ENCODE measurements at regions of chr5 and their contacts with region 1.

Region 1: DNA sequence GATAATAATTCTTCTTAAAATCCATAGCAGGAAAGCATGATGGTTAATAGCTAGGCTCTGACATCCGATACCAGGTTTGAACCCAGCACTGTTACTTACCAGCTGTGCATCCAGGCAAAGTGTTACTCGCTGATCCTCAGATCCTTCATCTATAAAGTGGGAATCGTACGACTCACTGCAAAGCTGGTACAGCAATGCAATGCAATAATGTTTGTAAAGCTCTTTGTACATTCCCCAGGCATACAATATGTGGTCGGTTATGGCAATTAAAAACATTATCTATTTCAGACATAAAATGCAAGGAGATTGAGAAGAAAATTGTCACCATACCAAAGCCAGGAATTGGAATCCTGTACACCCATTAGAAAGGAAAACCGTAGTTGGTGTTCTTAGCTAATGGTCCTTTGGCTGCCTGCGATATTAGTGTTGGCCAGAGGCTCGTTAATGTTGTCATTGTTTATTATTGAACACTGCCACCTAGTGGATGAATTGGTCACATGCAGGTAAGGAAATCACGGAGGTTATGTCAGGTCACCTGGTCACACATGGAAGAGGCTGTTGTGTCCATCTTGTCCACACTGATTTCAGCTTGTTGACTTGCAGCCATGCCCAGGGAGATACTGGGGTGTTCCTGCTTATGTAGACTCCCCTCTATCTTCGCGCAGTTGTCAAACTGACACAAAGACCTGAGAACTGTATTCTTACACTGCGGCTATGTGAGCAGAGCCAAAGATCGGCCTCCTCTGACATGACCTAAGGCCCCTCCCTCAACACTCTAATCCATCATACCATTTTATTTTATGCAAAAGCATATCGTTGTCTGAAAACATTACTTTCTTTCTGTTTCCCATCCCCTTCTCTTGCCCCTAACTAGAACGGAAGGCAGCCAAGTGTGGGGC is 87.5 kb upstream of the PPP2R2B start:
- DNase-seq: peak; percentile 68
- H3K4me3 ChIP-seq: no peak overlapping the region
- H3K27ac ChIP-seq: no peak overlapping the region
- H3K4me1 ChIP-seq: no peaks in the 10 kb centered on the region
- H3K27me3 ChIP-seq: no peaks in the 10 kb centered on the region
- CTCF ChIP-seq: peak; percentile 88 to 97 (median 92)
- POLR2A ChIP-seq: no peak

Region 2: GRCh38 chr5:146544232-146544631 is 421.8 kb before region 1 on chr5:
- intact Hi-C with region 1: loop called (anchors 2 kb)
- DNase-seq: no peak
- H3K4me3 ChIP-seq: no peak overlapping the region
- H3K27ac ChIP-seq: no peak overlapping the region
- H3K4me1 ChIP-seq: no peaks in the 10 kb centered on the region
- H3K27me3 ChIP-seq: no peaks in the 10 kb centered on the region
- CTCF ChIP-seq: no peak
- POLR2A ChIP-seq: no peak

Region 3: DNA sequence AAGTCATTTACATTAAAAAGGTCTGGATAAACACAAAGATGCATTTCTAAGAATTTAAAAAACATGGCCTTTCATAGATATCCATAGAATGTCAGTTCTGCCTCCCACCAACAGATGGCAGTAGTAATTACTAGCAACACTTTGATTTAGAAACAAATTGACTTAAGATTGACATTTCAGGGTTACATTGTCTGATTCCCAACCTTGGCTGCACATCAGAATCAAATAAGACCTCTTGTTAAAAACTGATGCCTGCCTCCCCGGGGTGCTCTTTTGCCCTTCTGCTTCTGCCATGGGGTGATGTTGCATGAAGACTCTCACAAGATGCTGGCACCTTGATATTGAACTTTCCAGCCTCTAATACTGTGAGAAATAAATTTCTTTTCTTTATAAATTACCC is 303.8 kb before region 1 on chr5:
- intact Hi-C with region 1: loop called (anchors 5 kb)
- DNase-seq: no peak
- H3K4me3 ChIP-seq: no peak overlapping the region
- H3K27ac ChIP-seq: no peak overlapping the region
- H3K4me1 ChIP-seq: no peaks in the 10 kb centered on the region
- H3K27me3 ChIP-seq: no peaks in the 10 kb centered on the region
- CTCF ChIP-seq: peak in 3 of 4 experiments; percentile 32 to 49 (median 37)
- POLR2A ChIP-seq: no peak

Region 4: DNA sequence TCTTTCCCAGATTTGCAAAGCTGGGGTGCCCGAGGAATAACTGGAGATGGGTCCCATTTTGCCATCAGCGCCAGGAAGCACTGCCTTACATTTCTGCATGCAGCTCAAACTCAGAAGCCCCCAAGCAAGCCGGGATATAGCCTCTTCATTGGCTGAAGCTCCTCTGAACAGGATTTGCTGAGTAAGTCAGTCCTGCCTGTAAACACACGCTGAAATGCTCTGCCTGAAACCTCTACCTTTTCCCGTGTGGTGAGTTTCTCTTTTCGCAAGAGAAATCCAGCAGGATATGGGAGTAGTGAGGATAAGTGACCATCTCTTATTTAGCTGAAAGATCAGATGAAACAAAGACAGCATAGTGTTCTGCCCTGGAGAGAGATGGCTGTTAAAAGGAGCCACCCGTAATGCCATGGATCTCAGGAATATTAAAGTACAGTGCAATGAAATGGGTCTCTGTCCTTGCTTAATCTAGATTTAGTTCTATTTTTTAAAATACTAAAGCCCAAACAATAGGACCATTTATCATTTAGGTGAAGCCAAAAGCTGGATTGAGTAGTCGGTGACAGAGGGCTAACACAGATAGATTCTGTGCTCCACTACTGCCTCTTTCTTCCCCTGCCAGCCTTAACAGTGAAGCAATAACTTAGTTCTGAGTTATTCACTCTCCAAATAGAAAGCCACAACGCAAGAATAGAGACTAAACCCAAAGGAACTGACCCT is 90.0 kb after region 1 on chr5:
- intact Hi-C with region 1: no loop called
- DNase-seq: no peak
- H3K4me3 ChIP-seq: no peak overlapping the region
- H3K27ac ChIP-seq: no peak overlapping the region
- H3K4me1 ChIP-seq: no peaks in the 10 kb centered on the region
- H3K27me3 ChIP-seq: peaks cover 5% of the 10 kb centered on the region
- CTCF ChIP-seq: no peak
- POLR2A ChIP-seq: no peak

Region 5: DNA sequence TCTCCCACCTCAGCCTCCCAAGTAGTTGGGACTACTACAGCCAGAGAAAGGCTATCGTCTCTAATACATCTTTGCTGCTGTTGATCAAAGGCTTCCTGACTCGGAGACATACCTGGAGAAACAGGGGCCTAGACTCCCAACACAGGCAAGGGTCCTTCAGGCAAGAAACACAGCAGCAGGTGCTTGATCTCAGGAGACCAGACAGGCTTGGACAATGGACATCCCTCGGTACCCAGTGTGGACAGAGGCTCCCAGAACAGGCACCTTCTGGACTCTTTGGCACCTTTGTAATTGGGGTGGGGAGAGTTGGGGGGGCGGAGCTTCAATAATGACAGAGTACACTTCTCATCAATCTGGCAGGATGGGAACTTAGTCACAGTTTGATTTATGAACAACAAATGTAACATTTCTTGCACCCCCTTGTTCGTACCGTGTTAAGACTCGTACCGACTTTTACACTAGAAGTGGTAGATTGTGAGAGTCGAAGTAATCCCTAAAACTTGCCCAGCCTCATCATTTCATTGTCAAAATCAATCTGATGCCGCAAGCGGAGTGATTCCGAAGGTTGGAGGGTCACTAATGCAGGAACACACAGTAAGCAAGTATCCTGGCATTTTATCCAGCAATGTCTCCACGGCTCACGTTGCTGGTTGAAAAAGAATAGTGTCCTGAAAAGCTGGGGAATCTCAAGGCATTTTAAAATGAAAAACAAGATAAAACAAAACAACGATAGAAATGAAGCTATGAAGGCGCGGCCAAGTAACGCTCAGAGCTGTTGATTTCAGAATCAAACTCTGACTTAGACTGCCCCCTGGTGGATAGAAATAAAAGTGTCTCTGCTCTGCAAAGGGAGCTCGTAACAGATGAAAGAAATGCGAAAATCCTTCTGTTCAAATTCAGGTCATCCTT is 222.4 kb after region 1 on chr5:
- intact Hi-C with region 1: loop called (anchors 10 kb)
- DNase-seq: peak; percentile 38
- H3K4me3 ChIP-seq: no peak overlapping the region
- H3K27ac ChIP-seq: no peak overlapping the region
- H3K4me1 ChIP-seq: no peaks in the 10 kb centered on the region
- H3K27me3 ChIP-seq: peaks cover 3% of the 10 kb centered on the region
- CTCF ChIP-seq: peak; percentile 66 to 93 (median 72)
- POLR2A ChIP-seq: no peak

Region 6: DNA sequence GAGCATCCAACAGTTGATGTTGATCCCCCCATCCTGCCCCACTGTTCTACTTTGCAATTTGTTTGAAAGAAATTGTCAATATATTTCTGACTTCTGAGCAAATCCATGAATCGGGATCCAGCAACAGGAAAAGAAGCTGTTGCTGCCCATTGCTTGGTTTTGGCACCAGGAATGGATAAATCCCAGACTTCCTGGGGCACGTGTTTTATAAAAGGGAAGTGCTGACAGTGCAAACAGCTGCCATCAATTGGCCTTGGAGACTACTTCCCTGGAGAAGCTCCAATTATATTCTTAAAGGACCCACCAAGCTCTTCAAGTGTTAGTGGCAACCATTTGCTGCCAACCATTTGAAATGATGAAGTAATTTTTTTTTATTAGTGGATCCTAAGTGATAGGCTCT is 282.6 kb after region 1 on chr5:
- intact Hi-C with region 1: no loop called
- DNase-seq: no peak
- H3K4me3 ChIP-seq: no peak overlapping the region
- H3K27ac ChIP-seq: no peak overlapping the region
- H3K4me1 ChIP-seq: no peaks in the 10 kb centered on the region
- H3K27me3 ChIP-seq: no peaks in the 10 kb centered on the region
- CTCF ChIP-seq: no peak
- POLR2A ChIP-seq: no peak